ENCODE measurements at regions of chr2 and their contacts with region 1.

Region 1: GRCh38 chr2:70871398-70872211 is 36.0 kb upstream of the CD207 start:
- DNase-seq: peak; percentile 96

Region 2: DNA sequence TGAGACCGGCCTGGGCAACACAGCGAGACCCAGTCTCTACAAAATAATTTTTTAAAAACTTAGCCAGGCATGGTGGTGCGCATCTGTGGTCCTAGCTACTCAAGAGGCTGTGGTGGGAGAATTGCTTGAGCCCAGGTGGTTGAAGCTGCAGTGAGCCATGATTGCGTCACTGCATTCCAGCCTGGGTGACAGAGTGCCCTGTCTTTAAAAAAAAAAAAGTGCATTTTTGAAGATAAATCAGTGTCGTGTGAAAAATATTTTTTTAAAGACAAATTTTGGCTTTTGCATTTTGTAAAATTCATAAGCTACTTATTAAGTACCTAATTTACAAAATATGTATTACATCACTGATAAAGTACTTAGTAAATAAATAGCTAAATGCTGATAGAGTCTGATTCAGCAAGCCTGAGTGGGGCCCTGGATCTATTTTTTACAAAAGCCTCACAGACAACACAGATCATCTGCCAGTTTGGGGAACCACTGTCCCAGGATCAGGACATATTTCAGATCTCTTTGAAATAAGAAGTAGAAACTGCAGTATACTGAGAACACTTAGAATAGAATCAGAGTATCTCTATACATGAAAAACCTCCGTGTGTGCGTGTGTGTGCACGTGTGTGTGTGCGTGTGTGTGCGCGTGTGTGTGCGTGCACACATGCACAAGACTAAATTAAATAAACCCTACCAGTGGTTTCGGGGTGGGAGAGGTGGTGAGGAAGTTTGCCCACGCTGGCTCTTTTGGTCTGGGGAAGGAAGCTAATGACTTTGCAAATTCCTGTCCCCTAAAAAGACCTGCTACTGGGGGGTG is 1289.6 kb before region 1 on chr2:
- intact Hi-C with region 1: no loop called
- DNase-seq: no peak

Region 3: DNA sequence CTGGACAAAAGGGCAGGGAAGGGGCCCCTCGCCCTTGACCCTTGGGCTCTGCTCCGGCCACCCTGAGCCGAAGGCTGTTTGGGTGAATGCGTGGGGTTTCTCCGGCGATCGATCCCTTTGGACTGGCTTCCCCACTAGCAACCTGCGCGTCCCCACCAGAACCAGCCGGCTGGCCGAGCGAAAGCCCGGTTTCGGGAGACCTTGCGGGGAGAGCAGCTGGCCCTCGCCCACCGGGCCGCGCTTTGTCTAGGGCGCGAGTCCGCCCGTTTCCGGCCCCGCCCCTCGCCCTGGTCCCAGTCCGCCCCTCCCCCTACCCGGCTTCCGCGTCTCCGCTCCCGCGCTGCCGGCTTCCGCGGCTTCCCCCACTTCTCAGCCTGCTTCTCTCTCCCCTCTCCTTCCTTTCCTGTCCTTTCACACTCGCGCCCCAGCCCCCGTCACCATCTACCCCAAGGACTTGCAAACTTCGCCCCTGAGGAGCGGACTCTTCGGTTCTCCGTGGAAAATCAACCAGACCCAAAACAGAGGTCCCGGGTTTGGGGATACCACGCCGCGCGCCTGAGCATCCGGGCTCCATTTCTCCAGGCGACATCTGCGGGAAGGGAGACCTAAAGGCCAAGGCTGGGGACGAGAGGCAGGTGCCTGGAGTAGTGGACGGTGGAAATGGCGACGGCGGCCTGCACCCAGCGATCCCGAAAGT is 16.1 kb after region 1 on chr2:
- intact Hi-C with region 1: no loop called
- DNase-seq: no peak

Region 4: DNA sequence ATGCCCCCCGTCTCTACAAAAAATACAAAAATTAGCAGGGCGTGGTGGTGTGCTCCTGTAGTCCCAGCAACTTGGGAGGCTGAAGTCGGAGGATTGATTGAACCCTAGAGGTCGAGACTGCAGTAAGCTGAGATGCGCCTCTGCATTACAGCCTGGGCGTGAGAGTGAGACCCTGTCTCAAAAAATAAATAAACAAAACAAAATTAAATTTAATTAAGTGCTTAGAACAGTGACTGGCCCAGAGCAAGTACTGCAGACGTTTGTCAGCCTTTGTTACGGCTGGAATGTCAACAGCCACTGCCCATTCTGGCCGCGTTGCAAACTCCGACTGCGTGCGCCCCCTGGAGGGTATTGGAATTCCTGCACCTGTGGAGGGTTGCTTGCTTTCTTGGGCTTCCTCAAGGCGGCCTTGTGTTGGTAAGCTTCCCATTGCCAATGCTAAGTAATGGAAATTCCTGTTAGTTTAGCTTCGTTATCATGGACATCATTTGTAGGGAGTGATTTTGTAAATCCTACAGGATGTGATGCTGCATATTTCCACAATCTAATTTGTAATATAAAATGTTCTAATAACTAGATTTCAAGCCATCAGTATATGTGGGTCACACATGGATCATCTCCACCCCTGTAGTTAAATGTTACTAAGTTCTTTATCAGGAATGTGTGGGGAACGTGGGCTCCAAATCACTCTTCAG is 48.2 kb after region 1 on chr2:
- intact Hi-C with region 1: loop called in 1 of 2 experiments (anchors 5 kb)
- DNase-seq: peak; percentile 95

Region 5: DNA sequence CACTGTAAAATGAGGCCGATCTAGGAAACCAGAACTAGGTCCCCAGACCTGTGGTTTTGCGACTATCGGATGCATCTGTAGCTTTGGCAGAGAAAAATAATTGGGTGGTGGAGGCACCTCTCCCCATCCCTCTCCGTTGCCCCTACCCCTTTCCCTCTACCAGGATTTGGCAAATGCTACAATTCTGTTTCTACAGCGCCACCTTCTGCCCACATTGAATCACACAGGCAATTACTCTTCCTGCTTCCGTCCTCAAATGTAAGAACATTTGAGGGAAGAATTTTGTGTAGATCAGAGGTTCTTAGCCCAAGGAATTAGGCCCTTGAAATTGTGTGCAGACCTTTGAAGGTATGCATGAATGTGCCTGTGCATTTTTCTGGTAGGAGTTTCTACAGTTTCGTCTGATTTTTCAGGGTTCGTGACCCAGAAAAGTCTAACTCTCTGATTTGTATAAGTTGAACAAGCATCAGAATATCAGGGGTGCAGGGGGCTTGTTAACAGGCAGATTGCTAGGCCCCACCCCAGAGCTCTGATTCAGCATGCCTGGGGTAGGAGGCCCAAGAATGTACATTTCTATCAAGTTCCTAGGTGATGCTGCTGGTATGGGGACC is 75.3 kb after region 1 on chr2:
- intact Hi-C with region 1: loop called in 1 of 2 experiments (anchors 2 kb)
- DNase-seq: no peak

Region 6: DNA sequence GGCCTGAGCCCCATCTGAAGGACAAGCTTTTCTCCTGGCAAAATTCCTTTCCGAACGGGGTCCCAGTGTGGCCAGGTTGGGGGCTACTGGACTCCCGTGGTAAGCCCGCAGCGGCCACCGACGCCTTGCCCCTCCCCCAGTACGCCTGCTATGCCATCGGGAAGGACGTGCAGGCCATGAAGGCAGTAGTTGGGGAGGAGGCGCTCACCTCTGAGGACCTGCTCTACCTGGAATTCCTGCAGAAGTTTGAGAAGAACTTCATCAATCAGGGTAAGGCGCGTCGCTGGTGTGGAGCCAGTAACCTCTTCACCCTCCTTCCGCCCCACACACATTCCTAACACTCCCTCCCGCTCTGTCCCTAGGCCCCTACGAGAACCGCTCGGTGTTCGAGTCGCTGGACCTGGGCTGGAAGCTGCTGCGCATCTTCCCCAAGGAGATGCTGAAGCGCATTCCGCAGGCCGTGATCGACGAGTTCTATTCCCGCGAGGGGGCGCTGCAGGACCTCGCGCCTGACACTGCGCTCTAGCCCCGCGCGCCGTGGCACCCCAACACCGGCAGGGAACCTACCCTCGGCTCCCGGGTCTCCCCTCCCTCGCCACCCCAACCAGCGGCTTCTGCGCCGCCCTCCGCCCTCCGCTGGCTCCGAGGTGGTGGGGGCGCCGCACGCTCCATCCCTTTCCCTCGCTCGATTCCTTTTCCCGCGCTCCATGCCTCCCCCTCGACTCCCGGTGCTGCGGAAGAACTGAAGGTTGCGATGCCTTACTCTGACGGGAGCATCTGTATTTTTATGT is 93.2 kb after region 1 on chr2:
- intact Hi-C with region 1: no loop called
- DNase-seq: peak; percentile 92

Measured in posterior vena cava (tissue), 2 donors.